ENCODE measurements at regions of chr12 and their contacts with region 1.

Region 1: DNA sequence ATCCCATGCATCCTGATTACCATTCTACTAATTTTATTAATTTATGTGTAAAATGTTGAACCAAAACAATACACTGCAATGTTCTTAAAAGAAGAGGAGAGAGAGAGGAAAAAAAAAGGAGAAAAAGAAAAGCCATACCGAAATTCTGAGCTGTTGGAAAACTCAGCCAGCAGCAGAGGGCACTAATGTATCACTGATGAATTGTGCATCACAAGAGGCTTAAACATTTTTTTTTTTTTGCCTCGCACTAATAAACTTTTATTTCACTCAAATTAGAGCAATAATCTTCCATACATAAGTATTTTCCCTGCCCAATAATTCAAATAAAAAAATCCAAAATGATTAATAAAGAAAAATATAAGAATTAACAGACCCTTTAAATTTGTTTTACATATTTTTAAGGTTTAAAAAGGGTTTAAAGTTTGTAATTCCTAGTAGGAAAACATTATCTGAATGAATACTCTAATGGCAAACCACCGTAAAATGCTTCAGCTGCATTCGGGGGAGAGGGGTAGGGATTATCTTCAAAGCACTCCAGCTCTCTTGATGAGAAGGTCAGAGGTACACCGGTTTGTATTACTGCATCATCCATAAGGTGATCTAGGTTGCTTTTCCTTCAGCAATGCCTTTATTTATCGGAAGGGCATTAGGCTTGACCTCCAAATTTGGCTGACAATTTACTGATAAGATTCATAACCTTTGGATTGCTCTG is 41.9 kb downstream of the ATP23 start:
- DNase-seq: peak; percentile 47
- ATAC-seq: no peak
- H3K4me3 Mint-ChIP-seq: no peak overlapping the region
- H3K27ac Mint-ChIP-seq: no peak overlapping the region
- H3K4me1 Mint-ChIP-seq: no peaks in the 10 kb centered on the region
- H3K27me3 Mint-ChIP-seq: peaks cover 10% of the 10 kb centered on the region

Region 2: GRCh38 chr12:56900583-56900982 is 1082.7 kb before region 1 on chr12:
- CTCF ChIA-PET with region 1: no interaction called
- POLR2A ChIA-PET with region 1: no interaction called
- intact Hi-C with region 1: no loop called
- DNase-seq: peak; percentile 15
- ATAC-seq: no peak
- H3K4me3 Mint-ChIP-seq: no peak overlapping the region
- H3K27ac Mint-ChIP-seq: no peak overlapping the region
- H3K4me1 Mint-ChIP-seq: no peaks in the 10 kb centered on the region
- H3K27me3 Mint-ChIP-seq: peaks cover 9% of the 10 kb centered on the region

Region 3: GRCh38 chr12:57965766-57966165 is 17.5 kb before region 1 on chr12:
- CTCF ChIA-PET with region 1: no interaction called
- POLR2A ChIA-PET with region 1: no interaction called
- intact Hi-C with region 1: no loop called
- DNase-seq: no peak
- ATAC-seq: no peak
- H3K4me3 Mint-ChIP-seq: no peak overlapping the region
- H3K27ac Mint-ChIP-seq: no peak overlapping the region
- H3K4me1 Mint-ChIP-seq: no peaks in the 10 kb centered on the region
- H3K27me3 Mint-ChIP-seq: peaks cover 2% of the 10 kb centered on the region

Region 4: DNA sequence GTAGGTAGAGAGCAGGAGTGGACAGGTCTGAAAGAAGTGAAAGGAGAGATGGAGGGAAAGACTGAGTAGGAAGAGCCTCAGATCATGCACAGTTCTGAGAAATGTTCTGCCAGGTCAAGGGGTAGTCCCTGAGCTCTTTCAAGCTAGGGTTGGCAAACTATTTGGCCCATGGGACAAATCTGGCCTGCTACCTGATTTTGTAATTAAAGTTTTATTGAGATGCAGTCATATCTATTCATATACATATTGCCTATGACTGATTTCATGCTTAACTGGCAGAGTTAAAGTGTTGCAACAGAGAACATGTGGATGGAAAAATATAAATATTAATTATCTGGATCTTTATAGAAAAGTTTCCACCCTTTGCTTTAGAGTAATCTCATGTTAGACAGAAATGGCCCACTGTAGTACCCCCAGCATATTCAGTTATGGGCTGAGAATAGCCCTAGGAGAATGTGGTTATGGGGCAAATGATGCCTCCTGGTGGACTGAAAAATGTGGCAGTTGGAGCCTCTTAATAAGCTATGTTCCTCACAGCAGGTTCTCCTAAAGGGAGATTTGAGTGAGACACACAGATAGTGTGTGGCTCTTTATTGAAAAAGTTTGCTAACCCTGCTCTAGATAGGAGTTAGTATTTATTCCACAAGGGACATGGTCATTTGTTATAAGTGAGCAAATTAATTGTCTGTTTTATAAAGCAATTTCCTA is 460.1 kb after region 1 on chr12:
- CTCF ChIA-PET with region 1: interaction called, 5 read pairs
- POLR2A ChIA-PET with region 1: no interaction called
- intact Hi-C with region 1: loop called in 1 of 2 experiments (anchors 10 kb)
- DNase-seq: peak; percentile 16
- ATAC-seq: no peak
- H3K4me3 Mint-ChIP-seq: no peak overlapping the region
- H3K27ac Mint-ChIP-seq: no peak overlapping the region
- H3K4me1 Mint-ChIP-seq: no peaks in the 10 kb centered on the region
- H3K27me3 Mint-ChIP-seq: peaks cover 2% of the 10 kb centered on the region

Measured in activated CD4-positive, alpha-beta T cell treated with anti-CD3 and anti-CD28 coated beads for 36 hours (primary cell).